Calu3 (cell line): ENCODE measurements at regions of chr10 and their contacts with region 1.

Region 1: DNA sequence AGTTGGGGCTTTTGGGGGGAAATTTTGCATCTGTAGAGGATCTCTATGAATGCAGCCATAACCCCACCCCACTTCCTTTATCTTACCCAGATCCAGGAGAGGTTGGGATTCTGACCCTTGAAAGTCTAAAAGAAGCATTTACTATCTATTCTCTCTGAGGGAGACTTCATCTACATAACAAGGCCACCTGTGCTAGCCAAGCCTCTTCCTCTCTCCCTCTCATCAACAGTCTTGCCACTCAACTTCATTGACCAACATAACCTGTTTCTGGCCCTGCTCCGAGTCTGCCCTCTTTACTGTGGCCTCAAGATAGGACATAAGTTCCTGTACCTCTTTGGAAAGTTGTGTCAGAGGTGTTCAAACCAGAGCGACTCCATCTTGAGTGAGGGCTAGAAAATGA is 19.4 kb downstream of the TUBAL3 start:
- DNase-seq: no peak
- H3K4me3 Mint-ChIP-seq: no peak overlapping the region
- H3K27ac Mint-ChIP-seq: no peak overlapping the region
- H3K4me1 Mint-ChIP-seq: no peaks in the 10 kb centered on the region
- H3K27me3 Mint-ChIP-seq: no peaks in the 10 kb centered on the region
- CTCF ChIP-seq: no peak

Region 2: DNA sequence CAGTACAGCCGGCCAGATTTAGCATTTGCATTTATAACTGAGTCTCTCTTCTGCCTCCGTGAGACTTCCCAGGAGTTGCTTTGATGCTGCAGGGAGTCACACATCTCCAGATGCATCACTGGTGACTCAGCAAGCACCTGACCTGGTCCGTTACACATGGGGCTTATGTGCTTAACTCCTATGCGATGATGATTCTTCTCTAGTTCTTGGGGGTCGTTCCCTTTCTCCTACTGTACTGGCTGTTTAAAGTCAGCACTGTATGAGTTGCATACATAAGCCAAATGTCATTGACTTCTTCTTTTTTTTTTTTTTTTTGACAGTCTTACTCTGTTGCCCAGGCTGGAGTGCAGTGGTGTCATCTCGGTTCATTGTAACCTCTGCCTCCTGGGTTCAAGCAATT is 572.2 kb before region 1 on chr10:
- CTCF ChIA-PET with region 1: no interaction called
- intact Hi-C with region 1: loop called (anchors 10 kb)
- DNase-seq: peak; percentile 21
- H3K4me3 Mint-ChIP-seq: no peak overlapping the region
- H3K27ac Mint-ChIP-seq: no peak overlapping the region
- H3K4me1 Mint-ChIP-seq: peaks cover 34% of the 10 kb centered on the region
- H3K27me3 Mint-ChIP-seq: no peaks in the 10 kb centered on the region
- CTCF ChIP-seq: no peak

Region 3: GRCh38 chr10:5293691-5294550 is 91.3 kb before region 1 on chr10:
- CTCF ChIA-PET with region 1: no interaction called
- intact Hi-C with region 1: loop called (anchors 5 kb)
- DNase-seq: peak; percentile 82
- H3K4me3 Mint-ChIP-seq: peak overlapping the region; percentile 14
- H3K27ac Mint-ChIP-seq: peak overlapping the region; percentile 97
- H3K4me1 Mint-ChIP-seq: peaks cover 44% of the 10 kb centered on the region
- H3K27me3 Mint-ChIP-seq: no peaks in the 10 kb centered on the region
- CTCF ChIP-seq: peak; percentile 64

Region 4: DNA sequence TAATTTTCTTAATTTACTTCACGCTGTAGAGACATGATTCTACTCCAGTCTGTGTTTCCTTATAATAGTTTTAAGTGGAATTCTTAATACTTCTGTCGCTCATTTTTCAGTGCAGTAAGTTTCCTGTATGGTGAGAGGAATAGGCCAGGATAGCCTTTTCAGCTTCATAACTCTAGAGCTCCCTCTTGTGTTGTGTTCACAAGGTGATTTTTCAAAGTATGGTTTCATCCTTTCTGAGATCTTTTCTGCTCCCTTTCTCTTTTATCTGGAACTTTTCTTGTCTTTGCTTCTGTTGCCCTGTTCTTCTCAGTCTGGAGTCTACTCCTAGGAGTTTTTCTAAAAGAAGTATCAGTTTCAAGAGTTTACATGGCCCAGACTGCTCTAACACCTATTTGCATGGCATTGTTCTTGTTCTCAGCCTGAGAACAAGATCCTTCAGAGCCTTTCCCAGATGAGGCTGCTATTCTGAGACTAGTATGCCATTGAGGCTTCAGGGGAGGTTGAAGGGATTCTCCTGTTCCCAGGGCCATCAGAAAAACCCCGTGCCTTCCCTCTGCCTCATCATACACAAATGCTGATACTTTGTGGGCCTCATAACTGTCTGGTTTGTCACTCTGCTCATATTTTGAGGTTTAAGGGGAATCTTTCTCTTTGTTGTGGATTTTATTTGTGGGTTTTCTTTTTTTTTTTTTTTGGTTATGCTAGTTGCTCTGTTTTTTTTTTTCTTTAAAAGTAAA is 49.0 kb after region 1 on chr10:
- CTCF ChIA-PET with region 1: interaction called, 4 read pairs
- intact Hi-C with region 1: loop called (anchors 5 kb)
- DNase-seq: peak; percentile 41
- H3K4me3 Mint-ChIP-seq: no peak overlapping the region
- H3K27ac Mint-ChIP-seq: peak overlapping the region; percentile 22
- H3K4me1 Mint-ChIP-seq: peaks cover 27% of the 10 kb centered on the region
- H3K27me3 Mint-ChIP-seq: no peaks in the 10 kb centered on the region
- CTCF ChIP-seq: no peak

Region 5: GRCh38 chr10:5583525-5584175 is 198.4 kb after region 1 on chr10:
- CTCF ChIA-PET with region 1: no interaction called
- intact Hi-C with region 1: no loop called
- DNase-seq: no peak
- H3K4me3 Mint-ChIP-seq: no peak overlapping the region
- H3K27ac Mint-ChIP-seq: peak overlapping the region; percentile 19
- H3K4me1 Mint-ChIP-seq: peaks cover 38% of the 10 kb centered on the region
- H3K27me3 Mint-ChIP-seq: no peaks in the 10 kb centered on the region
- CTCF ChIP-seq: no peak